ACHN (cell line): ENCODE measurements at regions of chr5 and their contacts with region 1.

Region 1: DNA sequence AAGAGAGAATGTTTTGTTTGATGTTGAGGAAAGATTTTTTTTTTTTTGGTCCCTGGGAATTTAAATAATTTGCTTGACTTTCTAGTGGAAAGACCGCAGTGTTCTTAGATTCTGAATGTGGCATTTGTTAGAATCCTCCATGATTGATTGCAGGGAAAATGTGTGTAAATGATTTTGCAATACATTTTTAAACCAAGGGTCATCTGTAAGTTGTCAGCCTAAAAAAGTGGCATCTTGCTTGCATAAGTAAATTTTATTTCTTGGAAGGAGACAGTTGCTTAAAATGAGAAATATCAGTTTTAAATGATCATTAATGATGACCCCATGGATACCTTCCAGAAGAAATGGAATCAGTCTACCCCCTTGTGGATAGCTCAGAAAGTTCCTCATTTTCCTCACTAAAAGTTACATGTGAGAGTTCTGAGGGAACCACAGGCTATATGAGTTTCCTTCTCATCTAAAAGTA is 105.1 kb upstream of the SLC25A48 start:
- DNase-seq: peak; percentile 34

Region 2: GRCh38 chr5:135560858-135561257 is 168.5 kb before region 1 on chr5:
- in situ Hi-C with region 1: loop called (anchors 25 kb)
- DNase-seq: peak; percentile 76

Region 3: DNA sequence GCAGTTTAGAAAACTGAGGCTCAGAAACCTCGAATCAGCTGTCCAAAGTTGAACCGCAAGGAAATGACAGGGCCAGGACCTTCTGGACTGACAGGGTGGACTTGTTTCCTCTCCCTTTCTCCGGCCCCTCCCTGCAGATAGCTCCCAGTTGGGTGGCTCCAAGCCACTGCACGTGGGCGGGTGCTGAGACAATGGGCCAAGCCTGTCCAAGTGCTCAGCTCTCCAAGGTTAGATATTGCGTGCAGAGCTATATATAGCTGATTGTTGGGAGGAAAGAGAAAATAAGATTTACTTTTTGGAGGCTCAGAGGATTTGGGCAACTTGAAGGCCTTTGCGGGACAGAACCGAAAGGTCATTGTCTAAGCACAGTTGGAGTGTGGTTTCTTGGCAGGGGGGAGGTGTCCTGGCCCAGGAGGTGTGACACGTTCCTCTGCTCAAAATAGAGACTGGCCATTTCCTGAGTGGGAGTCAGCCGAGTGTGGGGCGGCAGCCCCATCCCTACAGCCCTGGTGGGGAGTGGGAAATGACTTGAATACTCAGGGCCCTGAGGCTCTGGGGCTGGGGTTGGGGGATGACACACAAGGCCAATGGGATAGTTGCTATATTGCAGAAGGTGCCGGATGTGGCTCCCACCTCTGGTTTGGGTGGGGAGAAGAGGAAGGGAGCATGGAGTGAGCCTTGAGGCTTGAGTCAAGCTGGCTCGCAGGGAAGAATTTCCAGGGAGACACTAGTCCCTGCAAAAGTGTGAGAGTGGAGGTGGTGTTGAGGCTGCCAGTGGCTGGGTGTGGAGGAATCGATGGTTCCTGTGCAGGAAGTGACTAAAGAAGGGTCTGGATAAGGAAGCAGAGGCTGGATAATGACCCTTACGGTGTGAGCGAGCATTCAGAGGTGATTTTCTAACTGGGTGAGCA is 358.9 kb after region 1 on chr5:
- in situ Hi-C with region 1: no loop called
- DNase-seq: no peak